ENCODE measurements at regions of chr1 and their contacts with region 1.

Region 1: DNA sequence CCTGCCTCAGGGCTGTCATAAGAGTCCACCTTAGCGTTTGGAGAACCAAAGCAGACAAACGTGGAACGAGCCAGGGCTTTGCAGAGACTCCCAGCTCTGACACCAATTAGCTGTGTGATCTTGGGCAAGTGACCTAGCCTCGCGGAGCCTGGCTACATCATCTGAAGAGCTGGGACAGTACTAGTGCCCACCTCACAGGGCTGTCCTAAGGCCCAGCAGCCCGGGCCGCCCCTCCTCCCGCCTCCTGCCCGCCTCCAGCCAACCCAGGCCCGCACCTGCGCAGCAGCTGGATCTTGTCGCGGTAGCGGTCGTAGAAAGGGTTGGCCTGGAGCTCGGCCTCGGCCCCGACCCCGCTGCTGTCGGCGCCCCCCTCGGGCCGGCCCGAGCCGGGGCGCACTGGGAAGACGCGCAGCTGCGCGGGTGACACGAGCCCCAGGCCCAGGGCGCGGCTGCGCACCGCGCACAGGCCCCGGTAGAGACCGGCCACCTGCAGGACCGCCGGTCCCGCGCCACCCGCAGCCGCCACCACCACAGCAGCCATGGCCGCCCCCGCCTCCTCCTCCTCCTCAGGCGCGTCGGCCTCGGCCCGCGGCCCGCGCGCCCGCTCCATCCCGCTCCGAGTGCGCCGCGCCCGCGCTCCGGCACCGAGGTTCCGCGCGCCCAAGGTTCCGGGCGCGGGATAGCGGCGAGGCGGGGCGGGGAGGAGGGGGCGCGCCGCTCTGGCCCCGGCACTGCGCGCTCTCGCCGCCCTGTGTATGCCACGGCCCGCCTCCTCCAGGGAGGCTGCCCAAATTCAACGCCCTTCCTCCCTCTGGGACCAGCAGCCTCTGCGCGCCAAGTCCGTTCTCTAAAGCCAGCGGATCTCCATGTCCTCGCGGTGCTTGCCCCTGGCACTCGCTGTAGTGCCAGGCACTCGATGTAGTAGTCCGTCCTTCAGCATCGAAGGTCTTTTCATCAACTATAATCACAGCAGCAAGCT is at the start of gene ATPAF1:
- DNase-seq: peak; percentile 35
- H3K4me3 Mint-ChIP-seq: no peak within 1 kb of the TSS
- H3K27ac Mint-ChIP-seq: peak within 1 kb of the TSS; percentile 54
- H3K4me1 Mint-ChIP-seq: peaks cover 14% of the 10 kb centered on the region
- H3K27me3 Mint-ChIP-seq: no peaks in the 10 kb centered on the region
- CTCF ChIP-seq: no peak
- total RNA-seq, gene ATPAF1: 43.2 and 44.1 TPM in 2 replicates

Region 2: DNA sequence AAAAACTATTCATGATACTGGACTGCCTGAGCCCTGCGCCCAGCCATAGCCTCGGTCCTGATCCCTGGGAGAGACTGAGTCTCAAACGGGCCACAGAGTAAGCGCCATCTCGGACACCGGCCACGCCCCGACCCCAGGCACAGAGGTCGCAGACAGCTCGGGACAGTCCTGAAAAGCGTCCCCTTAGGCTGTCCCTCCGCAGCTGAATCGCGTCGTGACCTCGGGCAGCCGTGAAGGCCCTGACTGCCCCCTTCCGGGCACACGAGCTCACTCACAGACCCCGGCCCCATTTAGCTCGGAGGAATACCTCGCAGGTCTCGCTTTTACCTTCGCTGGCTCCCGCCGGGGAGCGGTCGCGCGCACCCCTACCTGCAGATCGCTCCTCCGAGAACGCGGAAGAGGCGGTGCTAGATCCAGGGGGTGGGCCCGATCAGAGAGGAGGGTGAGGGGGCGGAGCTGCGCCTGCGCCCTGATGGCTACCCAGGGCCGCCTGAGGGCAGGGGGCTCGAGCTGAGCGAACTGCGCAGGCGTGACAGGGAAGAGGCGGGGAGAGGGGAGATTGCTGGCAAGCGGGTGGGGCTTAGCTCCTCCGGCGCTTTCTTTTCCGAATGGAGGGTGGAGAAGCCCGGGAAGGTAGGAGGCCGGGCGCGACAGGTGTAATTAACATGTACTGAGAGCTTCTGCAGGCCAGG is 64.1 kb before region 1 on chr1 and contains the start of gene MKNK1:
- CTCF ChIA-PET with region 1: interaction called, 3 read pairs
- POLR2A ChIA-PET with region 1: interaction called, 15 read pairs
- intact Hi-C with region 1: no loop called
- DNase-seq: peak; percentile 97
- H3K4me3 Mint-ChIP-seq: peak within 1 kb of the TSS; percentile 91
- H3K27ac Mint-ChIP-seq: peak within 1 kb of the TSS; percentile 80
- H3K4me1 Mint-ChIP-seq: peaks cover 17% of the 10 kb centered on the region
- H3K27me3 Mint-ChIP-seq: no peaks in the 10 kb centered on the region
- CTCF ChIP-seq: peak; percentile 7
- total RNA-seq, gene MKNK1: 25.6 and 33.7 TPM in 2 replicates

Region 3: DNA sequence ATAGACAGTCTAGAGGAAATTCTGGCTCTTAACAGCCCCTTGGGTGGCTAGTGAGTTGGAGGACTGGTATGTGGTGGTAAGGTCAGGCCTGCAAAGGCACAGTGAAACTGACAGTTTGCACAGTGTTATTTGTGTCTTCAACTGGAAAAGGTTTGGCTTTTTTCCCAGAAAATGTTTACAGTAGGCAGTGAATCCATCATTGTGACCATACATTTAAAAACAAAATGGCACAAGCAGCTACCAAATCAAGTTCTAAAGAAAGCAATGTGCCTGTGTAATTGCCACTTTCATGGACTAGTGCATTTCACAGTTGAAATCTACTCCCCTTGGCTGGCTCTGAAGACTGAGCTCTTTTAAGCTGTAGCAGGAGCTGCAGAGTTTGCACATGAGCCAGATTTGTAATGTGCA is 24.7 kb before region 1 on chr1:
- CTCF ChIA-PET with region 1: interaction called, 3 read pairs
- POLR2A ChIA-PET with region 1: interaction called, 14 read pairs
- intact Hi-C with region 1: no loop called
- DNase-seq: peak; percentile 78
- H3K4me3 Mint-ChIP-seq: no peak overlapping the region
- H3K27ac Mint-ChIP-seq: no peak overlapping the region
- H3K4me1 Mint-ChIP-seq: peaks cover 23% of the 10 kb centered on the region
- H3K27me3 Mint-ChIP-seq: no peaks in the 10 kb centered on the region
- CTCF ChIP-seq: no peak

Region 4: DNA sequence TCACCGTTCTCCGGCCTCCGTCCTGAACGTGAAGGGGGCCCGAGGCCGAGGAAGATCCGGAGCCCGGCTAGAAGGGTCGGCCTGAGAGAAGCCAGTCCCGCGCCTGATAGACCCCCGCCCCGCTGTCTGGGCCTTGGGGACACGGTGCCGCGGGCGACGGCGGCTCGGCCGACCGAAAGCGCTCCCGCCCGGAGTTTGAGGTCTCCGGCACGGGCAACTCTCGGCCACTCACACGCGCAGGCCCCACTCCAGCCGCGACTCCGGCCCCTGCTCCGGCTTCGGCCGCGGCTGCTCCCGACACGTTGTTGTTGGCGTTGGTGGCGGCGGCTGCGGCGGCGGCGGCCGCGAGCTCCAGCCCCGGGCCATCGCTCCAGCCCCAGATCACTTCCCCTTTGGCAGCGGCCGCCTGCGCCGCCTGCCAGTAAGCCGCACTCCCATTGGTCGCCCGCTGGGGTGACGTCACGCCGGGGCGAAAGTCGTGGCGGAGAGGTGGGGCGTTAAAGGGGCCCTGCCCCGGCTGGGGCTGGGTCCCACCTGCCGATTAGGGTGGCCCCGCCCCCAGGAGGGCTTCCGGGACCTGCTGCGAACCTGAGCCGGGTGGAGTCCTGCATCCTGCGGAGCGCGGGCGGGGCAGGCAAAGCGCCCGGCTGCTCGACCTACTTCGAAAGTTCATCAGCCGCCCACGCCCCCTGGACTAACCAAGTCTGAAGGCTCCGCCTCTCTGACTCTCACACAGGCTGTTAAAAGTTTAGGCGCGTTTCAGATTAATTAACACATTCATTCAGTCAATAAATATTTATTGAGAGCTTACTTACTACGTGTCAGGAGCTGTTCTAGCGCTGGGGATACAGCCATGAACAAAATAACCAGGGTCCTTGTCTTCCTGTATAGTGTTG is 50.9 kb after region 1 on chr1 and contains the start of gene EFCAB14:
- CTCF ChIA-PET with region 1: no interaction called
- POLR2A ChIA-PET with region 1: interaction called, 18 read pairs
- intact Hi-C with region 1: no loop called
- DNase-seq: peak; percentile 97
- H3K4me3 Mint-ChIP-seq: peak within 1 kb of the TSS; percentile 82
- H3K27ac Mint-ChIP-seq: peak within 1 kb of the TSS; percentile 90
- H3K4me1 Mint-ChIP-seq: peaks cover 25% of the 10 kb centered on the region
- H3K27me3 Mint-ChIP-seq: no peaks in the 10 kb centered on the region
- CTCF ChIP-seq: no peak
- total RNA-seq, gene EFCAB14: 33.9 and 48.1 TPM in 2 replicates

Measured in MCF 10A (cell line).